A673 (cell line): ENCODE measurements at regions of chr2 and their contacts with region 1.

Region 1: GRCh38 chr2:101135412-101136296 is 15.5 kb downstream of the TBC1D8 start:
- DNase-seq: peak; percentile 31
- H3K4me3 ChIP-seq: no peak overlapping the region
- H3K27ac ChIP-seq: no peak overlapping the region
- H3K4me1 ChIP-seq: no peaks in the 10 kb centered on the region
- H3K27me3 ChIP-seq: no peaks in the 10 kb centered on the region
- CTCF ChIP-seq: no peak

Region 2: DNA sequence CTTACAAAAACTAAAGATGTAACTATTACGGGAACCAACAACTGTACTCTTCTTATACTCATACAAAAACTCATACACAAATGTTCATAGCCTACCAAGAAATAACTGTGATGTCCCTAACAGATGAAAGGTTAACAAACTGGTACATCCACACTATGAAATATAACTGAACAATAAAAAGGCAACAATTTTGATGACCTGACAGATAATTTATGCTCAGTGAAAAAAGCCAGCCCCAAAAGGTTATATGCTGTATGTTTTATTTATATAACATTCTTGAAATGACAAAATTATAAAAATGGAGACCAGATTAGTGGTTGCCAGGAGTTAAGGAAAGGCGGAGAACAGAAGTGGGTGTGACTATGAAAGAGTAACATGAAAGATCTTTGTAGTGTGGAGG is 1677.1 kb before region 1 on chr2:
- CTCF ChIA-PET with region 1: no interaction called
- POLR2A ChIA-PET with region 1: no interaction called
- intact Hi-C with region 1: no loop called
- DNase-seq: no peak
- H3K4me3 ChIP-seq: no peak overlapping the region
- H3K27ac ChIP-seq: no peak overlapping the region
- H3K4me1 ChIP-seq: no peaks in the 10 kb centered on the region
- H3K27me3 ChIP-seq: no peaks in the 10 kb centered on the region
- CTCF ChIP-seq: no peak

Region 3: DNA sequence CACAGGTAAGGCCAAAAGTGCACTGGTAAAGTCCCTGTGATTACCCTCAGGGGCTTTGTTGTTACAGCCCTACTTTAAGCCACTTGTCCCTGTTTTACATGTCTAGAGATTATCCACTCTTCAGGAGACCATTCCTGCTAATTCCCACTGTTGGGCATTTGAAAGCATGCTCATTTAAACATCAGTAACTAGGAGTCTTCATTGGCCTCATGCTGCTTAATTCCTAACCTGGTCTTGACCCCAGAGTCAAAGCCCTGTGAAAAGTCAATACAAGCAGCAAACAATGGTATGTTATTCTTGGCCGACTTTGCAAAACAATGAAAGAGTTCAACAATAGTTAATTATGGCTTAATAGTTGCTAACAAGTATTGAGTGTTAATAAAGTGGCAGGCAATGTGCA is 1016.4 kb before region 1 on chr2:
- CTCF ChIA-PET with region 1: no interaction called
- POLR2A ChIA-PET with region 1: no interaction called
- intact Hi-C with region 1: no loop called
- DNase-seq: no peak
- H3K4me3 ChIP-seq: no peak overlapping the region
- H3K27ac ChIP-seq: no peak overlapping the region
- H3K4me1 ChIP-seq: no peaks in the 10 kb centered on the region
- H3K27me3 ChIP-seq: no peaks in the 10 kb centered on the region
- CTCF ChIP-seq: no peak

Region 4: DNA sequence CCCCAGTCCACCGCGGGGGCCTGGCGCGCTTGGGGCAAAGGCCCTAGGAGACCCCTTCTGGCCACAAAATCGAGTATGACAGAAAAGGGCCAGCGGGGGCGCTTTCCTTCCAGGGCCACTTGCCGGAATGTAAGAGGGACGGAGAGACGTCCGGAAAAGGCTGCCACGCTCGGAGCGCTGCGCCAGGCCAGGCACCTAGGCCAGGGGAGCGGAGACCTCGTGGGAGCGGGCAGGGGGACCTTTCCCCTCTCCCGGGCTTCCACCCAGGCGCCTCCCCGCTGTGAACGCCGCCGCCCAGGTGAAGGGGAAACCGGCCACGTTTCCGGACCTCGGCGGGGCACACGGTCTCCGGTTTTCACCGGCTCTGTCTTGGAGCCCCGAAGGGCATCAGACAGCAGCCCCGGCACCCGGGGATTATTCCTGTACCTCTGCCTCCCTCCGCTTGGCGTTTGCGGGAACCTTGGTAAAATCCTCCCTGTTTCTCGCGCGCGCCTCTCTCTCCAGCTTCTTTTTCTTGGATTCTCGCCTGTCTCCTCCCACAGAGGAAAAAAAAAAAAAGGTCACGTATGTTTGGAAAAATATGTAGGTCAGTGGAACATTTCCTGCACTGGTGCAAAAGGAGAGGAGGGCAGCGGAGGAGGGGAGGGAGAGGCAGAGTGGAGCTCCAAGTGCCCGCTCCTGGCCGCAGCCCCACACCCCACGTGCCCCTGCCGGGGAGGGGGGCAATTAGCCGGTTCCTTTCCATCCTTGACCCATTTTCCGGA is 316.9 kb before region 1 on chr2:
- CTCF ChIA-PET with region 1: no interaction called
- POLR2A ChIA-PET with region 1: no interaction called
- intact Hi-C with region 1: loop called (anchors 5 kb)
- DNase-seq: peak; percentile 39
- H3K4me3 ChIP-seq: peak overlapping the region; percentile 62
- H3K27ac ChIP-seq: no peak overlapping the region
- H3K4me1 ChIP-seq: peaks cover 7% of the 10 kb centered on the region
- H3K27me3 ChIP-seq: peaks cover 48% of the 10 kb centered on the region
- CTCF ChIP-seq: 0 out of 2 replicates have a peak, but pooled peaks have one; percentile 27

Region 5: GRCh38 chr2:100875516-100876230 is 260.0 kb before region 1 on chr2:
- CTCF ChIA-PET with region 1: no interaction called
- POLR2A ChIA-PET with region 1: interaction called, 20 read pairs
- intact Hi-C with region 1: no loop called
- DNase-seq: peak; percentile 60
- H3K4me3 ChIP-seq: no peak overlapping the region
- H3K27ac ChIP-seq: peak overlapping the region; percentile 21
- H3K4me1 ChIP-seq: peaks cover 9% of the 10 kb centered on the region
- H3K27me3 ChIP-seq: no peaks in the 10 kb centered on the region
- CTCF ChIP-seq: no peak

Region 6: DNA sequence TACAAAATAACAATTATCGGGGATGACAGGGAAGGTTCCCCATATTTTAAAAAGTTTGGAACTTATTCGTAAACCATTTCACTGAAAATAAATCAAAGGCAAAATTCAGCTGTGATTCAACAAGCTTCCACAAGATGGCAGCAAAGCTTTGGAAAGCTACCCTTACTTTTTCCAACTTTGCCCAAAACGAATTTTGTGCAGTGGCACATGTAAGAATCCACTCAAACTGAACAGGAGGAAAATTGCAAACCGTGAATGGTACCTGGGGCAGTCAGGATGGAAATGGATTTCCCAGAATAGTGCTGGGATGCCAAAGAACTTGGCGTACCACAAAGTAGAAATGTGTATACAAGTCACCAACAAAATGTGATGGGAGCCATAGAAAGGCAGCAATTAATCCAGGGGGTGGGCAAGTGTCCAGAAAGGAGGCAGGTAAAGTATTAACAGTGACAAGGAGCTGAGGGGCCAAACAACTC is 122.9 kb before region 1 on chr2:
- CTCF ChIA-PET with region 1: no interaction called
- POLR2A ChIA-PET with region 1: no interaction called
- intact Hi-C with region 1: no loop called
- DNase-seq: peak; percentile 62
- H3K4me3 ChIP-seq: no peak overlapping the region
- H3K27ac ChIP-seq: no peak overlapping the region
- H3K4me1 ChIP-seq: no peaks in the 10 kb centered on the region
- H3K27me3 ChIP-seq: no peaks in the 10 kb centered on the region
- CTCF ChIP-seq: peak; percentile 84